B cell (primary cell): ENCODE measurements at regions of chr1 and their contacts with region 1.

Region 1: GRCh38 chr1:160428655-160429054 is 28.3 kb downstream of the VANGL2 start:
- DNase-seq: peak; percentile 70
- ATAC-seq: peak; percentile 19
- H3K4me3 ChIP-seq: no peak overlapping the region
- H3K4me3 Mint-ChIP-seq: peak overlapping the region; percentile 38
- H3K27ac ChIP-seq: peak overlapping the region; percentile 88 to 89
- H3K27ac Mint-ChIP-seq: peak overlapping the region; percentile 99
- H3K4me1 ChIP-seq: peaks cover 57 to 60% of the 10 kb centered on the region in 2 donors
- H3K4me1 Mint-ChIP-seq: peaks cover 55% of the 10 kb centered on the region
- H3K27me3 ChIP-seq: no peaks in the 10 kb centered on the region
- H3K27me3 Mint-ChIP-seq: no peaks in the 10 kb centered on the region
- CTCF ChIP-seq: peak; percentile 67

Region 2: GRCh38 chr1:160466961-160467360 is 38.3 kb after region 1 on chr1:
- CTCF ChIA-PET with region 1: interaction called, 15 read pairs
- POLR2A ChIA-PET with region 1: interaction called, 4 read pairs
- intact Hi-C with region 1: no loop called
- DNase-seq: no peak
- ATAC-seq: no peak
- H3K4me3 ChIP-seq: peak overlapping the region in 1 of 5 experiments; percentile 11
- H3K4me3 Mint-ChIP-seq: peak overlapping the region; percentile 20
- H3K27ac ChIP-seq: no peak overlapping the region
- H3K27ac Mint-ChIP-seq: peak overlapping the region; percentile 34
- H3K4me1 ChIP-seq: peaks cover 45 to 54% of the 10 kb centered on the region in 2 donors
- H3K4me1 Mint-ChIP-seq: peaks cover 50% of the 10 kb centered on the region
- H3K27me3 ChIP-seq: no peaks in the 10 kb centered on the region
- H3K27me3 Mint-ChIP-seq: no peaks in the 10 kb centered on the region
- CTCF ChIP-seq: no peak

Region 3: DNA sequence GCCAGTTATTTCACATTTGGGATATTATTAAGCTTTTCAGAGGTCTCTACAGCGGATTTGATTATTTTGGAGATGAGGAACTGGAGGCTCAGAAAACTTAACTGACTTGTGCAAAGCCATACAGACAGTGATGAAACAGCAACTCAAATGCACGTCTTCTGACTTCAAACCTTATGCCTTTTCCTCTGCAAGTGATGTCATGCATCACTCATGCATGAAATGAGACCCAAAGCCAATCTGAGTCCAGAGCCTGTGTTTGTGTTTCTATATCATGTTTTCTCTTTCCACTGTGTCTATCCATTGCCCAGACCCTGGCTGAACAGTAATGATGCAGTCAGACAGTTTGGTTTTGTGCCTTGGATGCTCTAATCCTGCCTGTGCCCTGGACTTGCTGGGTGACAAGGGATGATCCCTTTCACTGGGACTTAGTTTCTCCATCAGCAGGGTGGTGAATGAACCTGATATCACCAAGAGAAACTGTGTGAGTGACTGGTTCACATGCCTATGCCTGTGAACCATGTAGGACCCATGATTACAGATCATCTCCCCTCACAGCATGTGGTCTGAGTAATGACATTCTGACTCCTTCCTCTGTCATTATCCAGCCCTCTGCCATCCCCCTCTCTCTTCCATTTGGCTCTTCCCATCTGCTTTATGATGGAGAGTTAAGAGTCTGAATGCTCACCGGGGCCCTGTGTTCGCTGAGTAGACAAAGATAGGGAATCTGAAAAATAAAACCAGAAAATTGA is 61.0 kb after region 1 on chr1:
- CTCF ChIA-PET with region 1: interaction called, 62 read pairs
- POLR2A ChIA-PET with region 1: interaction called, 17 read pairs
- intact Hi-C with region 1: loop called (anchors 1 kb)
- DNase-seq: peak; percentile 78
- ATAC-seq: peak; percentile 21
- H3K4me3 ChIP-seq: no peak overlapping the region
- H3K4me3 Mint-ChIP-seq: peak overlapping the region; percentile 81
- H3K27ac ChIP-seq: peak overlapping the region; percentile 85 to 93
- H3K27ac Mint-ChIP-seq: no peak overlapping the region
- H3K4me1 ChIP-seq: peaks cover 82 to 84% of the 10 kb centered on the region in 2 donors
- H3K4me1 Mint-ChIP-seq: peaks cover 4% of the 10 kb centered on the region
- H3K27me3 ChIP-seq: no peaks in the 10 kb centered on the region
- H3K27me3 Mint-ChIP-seq: no peaks in the 10 kb centered on the region
- CTCF ChIP-seq: no peak

Region 4: GRCh38 chr1:160550572-160551034 is 121.9 kb after region 1 on chr1:
- CTCF ChIA-PET with region 1: interaction called, 128 read pairs
- POLR2A ChIA-PET with region 1: no interaction called
- intact Hi-C with region 1: no loop called
- DNase-seq: no peak
- ATAC-seq: no peak
- H3K4me3 ChIP-seq: no peak overlapping the region
- H3K4me3 Mint-ChIP-seq: peak overlapping the region; percentile 8
- H3K27ac ChIP-seq: peak overlapping the region in 1 of 2 donors; percentile 88
- H3K27ac Mint-ChIP-seq: peak overlapping the region; percentile 94
- H3K4me1 ChIP-seq: peaks cover 65 to 67% of the 10 kb centered on the region in 2 donors
- H3K4me1 Mint-ChIP-seq: peaks cover 81% of the 10 kb centered on the region
- H3K27me3 ChIP-seq: no peaks in the 10 kb centered on the region
- H3K27me3 Mint-ChIP-seq: no peaks in the 10 kb centered on the region
- CTCF ChIP-seq: no peak

Region 5: GRCh38 chr1:160607011-160607671 is 178.5 kb after region 1 on chr1:
- CTCF ChIA-PET with region 1: interaction called, 233 read pairs
- POLR2A ChIA-PET with region 1: interaction called, 4 read pairs
- intact Hi-C with region 1: loop called (anchors 1 kb)
- DNase-seq: peak; percentile 88
- ATAC-seq: peak; percentile 94
- H3K4me3 ChIP-seq: no peak overlapping the region
- H3K4me3 Mint-ChIP-seq: peak overlapping the region; percentile 54
- H3K27ac ChIP-seq: peak overlapping the region; percentile 13 to 68
- H3K27ac Mint-ChIP-seq: peak overlapping the region; percentile 89
- H3K4me1 ChIP-seq: peaks cover 20 to 28% of the 10 kb centered on the region in 2 donors
- H3K4me1 Mint-ChIP-seq: peaks cover 32% of the 10 kb centered on the region
- H3K27me3 ChIP-seq: no peaks in the 10 kb centered on the region
- H3K27me3 Mint-ChIP-seq: no peaks in the 10 kb centered on the region
- CTCF ChIP-seq: peak; percentile 82

Region 6: GRCh38 chr1:160675641-160676410 is 247.2 kb after region 1 on chr1:
- CTCF ChIA-PET with region 1: interaction called, 37 read pairs
- POLR2A ChIA-PET with region 1: no interaction called
- intact Hi-C with region 1: no loop called
- DNase-seq: peak; percentile 83
- ATAC-seq: peak; percentile 81
- H3K4me3 ChIP-seq: no peak overlapping the region
- H3K4me3 Mint-ChIP-seq: peak overlapping the region; percentile 43
- H3K27ac ChIP-seq: peak overlapping the region in 1 of 2 donors; percentile 61
- H3K27ac Mint-ChIP-seq: peak overlapping the region; percentile 81
- H3K4me1 ChIP-seq: peaks cover 48 to 52% of the 10 kb centered on the region in 2 donors
- H3K4me1 Mint-ChIP-seq: peaks cover 16% of the 10 kb centered on the region
- H3K27me3 ChIP-seq: no peaks in the 10 kb centered on the region
- H3K27me3 Mint-ChIP-seq: no peaks in the 10 kb centered on the region
- CTCF ChIP-seq: peak; percentile 86